ENCODE measurements at regions of chr22 and their contacts with region 1.

Region 1: DNA sequence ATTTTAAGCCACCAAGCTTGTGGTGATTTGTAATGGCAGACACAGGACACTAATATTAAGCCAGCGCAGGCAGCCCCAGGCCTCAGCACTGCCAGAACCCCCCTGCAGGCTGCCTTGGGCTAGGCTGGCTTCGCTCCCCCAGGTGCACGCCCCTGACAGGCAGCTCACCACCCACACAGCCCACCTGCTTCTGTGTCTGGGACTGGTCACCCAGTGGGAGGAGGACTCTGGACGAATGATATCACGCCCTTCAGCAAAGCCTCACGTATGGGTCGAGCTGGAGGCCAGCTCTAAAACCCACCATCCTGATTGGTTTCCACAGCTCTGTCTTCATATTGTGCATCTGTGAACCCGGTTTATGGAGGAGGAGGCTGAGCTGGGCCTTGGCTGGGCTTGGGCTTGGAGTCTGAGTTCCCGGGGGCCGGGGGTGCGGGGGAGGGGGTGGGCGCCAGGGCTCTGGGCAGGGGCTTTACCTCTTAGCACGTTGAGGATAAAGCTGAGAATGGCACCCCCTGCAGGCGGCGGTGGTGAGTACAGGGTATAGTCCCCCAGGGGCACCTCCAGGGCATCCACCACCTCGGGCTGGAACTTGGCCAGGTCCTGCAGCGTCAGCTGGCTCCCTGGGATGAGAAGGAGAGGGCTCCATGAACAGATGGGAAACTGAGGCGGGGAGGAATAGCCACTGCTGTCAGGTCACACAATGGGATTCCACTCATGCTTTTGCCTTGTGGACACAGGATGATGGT is 13.8 kb downstream of the GGT5 start:
- DNase-seq: peak; percentile 65
- ATAC-seq: peak; percentile 74
- H3K4me3 ChIP-seq: no peak overlapping the region
- H3K4me3 Mint-ChIP-seq: no peak overlapping the region
- H3K27ac ChIP-seq: no peak overlapping the region
- H3K27ac Mint-ChIP-seq: no peak overlapping the region
- H3K4me1 ChIP-seq: no peaks in the 10 kb centered on the region
- H3K4me1 Mint-ChIP-seq: peaks cover 1% of the 10 kb centered on the region
- H3K27me3 ChIP-seq: no peaks in the 10 kb centered on the region
- H3K27me3 Mint-ChIP-seq: no peaks in the 10 kb centered on the region
- CTCF ChIP-seq: peak; percentile 63

Region 2: DNA sequence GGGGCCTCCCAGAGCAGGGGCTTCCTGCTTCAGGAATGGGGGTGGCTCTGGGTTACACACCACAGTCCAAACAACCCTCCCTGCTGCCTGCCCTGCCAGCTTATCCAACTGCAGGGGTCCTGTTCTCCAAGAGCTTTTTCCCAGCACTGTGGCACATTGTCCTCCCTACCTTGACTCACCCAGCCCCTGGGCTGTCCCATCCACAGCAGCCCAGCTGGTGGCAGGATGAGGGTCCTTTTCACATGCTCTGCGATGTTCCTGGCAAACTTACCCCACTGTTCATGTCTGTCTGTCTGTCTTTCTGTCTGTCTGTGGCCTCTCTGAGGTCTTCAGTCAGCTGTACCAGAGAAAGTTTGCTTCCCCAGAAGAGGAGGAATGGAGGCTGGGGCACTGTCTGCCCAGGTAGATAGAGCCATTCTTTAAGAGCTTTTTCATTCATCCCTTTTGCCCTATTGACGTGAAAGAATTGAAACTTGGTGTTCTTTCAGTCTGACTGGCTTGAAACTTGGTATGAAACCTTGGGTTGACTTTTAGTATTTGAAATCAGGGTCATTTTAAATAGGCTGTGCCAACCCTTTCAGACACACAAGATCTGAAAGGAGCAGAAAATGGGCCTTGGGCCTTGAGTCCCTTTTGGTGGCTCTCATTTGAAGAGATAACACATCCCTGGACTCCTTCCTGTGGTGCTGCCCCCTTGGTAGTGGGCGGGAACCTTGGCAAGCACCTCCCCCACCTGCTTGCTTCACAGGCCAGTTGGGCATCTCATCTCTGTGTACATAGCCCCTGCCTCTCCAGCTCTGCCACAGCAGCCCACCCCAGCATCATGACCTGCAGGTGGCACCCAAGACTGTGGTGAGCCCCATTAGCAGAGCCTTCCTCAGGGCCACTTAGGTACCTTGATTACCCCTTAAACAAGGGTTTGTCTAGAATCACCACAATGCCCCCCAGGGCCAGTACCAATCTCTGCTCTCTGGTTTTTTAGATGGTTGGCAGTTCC is 124.4 kb before region 1 on chr22:
- CTCF ChIA-PET with region 1: interaction called, 15 read pairs
- POLR2A ChIA-PET with region 1: no interaction called
- intact Hi-C with region 1: no loop called
- DNase-seq: peak; percentile 66
- ATAC-seq: peak; percentile 69
- H3K4me3 ChIP-seq: no peak overlapping the region
- H3K4me3 Mint-ChIP-seq: no peak overlapping the region
- H3K27ac ChIP-seq: no peak overlapping the region
- H3K27ac Mint-ChIP-seq: peak overlapping the region; percentile 37
- H3K4me1 ChIP-seq: no peaks in the 10 kb centered on the region
- H3K4me1 Mint-ChIP-seq: no peaks in the 10 kb centered on the region
- H3K27me3 ChIP-seq: no peaks in the 10 kb centered on the region
- H3K27me3 Mint-ChIP-seq: no peaks in the 10 kb centered on the region
- CTCF ChIP-seq: peak; percentile 63

Region 3: DNA sequence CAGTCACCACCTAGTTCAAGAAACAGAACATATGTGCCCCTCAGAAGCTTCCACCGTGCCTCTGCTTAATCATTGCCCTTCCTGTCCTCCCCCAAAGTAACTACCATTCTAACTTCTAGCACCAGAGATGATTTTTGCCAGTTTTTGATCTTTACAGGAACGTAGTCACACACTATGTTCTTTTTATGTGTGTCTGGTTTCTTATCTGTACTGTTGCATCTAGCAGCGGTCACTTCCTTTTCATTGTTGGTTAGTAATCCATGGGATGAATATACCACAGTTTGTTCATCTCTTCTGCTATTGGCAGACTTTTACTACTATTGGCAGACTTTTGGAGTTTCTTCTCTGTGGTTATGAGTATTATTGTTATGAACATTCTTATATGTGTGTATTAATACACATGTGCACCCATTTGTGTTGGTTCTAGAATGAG is 74.2 kb after region 1 on chr22:
- CTCF ChIA-PET with region 1: no interaction called
- POLR2A ChIA-PET with region 1: no interaction called
- intact Hi-C with region 1: no loop called
- DNase-seq: no peak
- ATAC-seq: no peak
- H3K4me3 ChIP-seq: no peak overlapping the region
- H3K4me3 Mint-ChIP-seq: no peak overlapping the region
- H3K27ac ChIP-seq: peak overlapping the region in 1 of 2 donors; percentile 17
- H3K27ac Mint-ChIP-seq: no peak overlapping the region
- H3K4me1 ChIP-seq: peaks cover 19 to 20% of the 10 kb centered on the region in 2 donors
- H3K4me1 Mint-ChIP-seq: peaks cover 46% of the 10 kb centered on the region
- H3K27me3 ChIP-seq: no peaks in the 10 kb centered on the region
- H3K27me3 Mint-ChIP-seq: no peaks in the 10 kb centered on the region
- CTCF ChIP-seq: no peak

Region 4: DNA sequence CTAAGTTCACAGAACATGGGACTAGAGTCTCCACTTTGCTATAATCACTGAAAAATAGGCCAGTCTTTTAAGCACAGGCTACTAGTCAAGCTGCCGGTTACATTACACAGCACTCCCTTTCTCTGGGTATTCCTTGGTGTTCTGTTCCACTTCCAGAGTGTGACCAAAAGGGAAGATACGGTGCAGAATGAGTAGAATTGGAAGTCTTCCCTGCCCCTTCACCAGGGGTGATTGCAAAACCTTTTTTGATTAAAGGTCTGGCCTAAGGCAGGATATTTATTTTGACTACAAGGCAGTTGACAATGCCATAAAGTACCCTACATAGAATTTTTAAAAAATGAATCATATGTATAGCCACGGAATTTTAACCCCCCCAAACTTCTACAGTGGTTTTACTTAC is 136.8 kb after region 1 on chr22:
- CTCF ChIA-PET with region 1: no interaction called
- POLR2A ChIA-PET with region 1: no interaction called
- intact Hi-C with region 1: no loop called
- DNase-seq: no peak
- ATAC-seq: no peak
- H3K4me3 ChIP-seq: no peak overlapping the region
- H3K4me3 Mint-ChIP-seq: no peak overlapping the region
- H3K27ac ChIP-seq: no peak overlapping the region
- H3K27ac Mint-ChIP-seq: no peak overlapping the region
- H3K4me1 ChIP-seq: no peaks in the 10 kb centered on the region
- H3K4me1 Mint-ChIP-seq: no peaks in the 10 kb centered on the region
- H3K27me3 ChIP-seq: no peaks in the 10 kb centered on the region
- H3K27me3 Mint-ChIP-seq: no peaks in the 10 kb centered on the region
- CTCF ChIP-seq: no peak

Measured in B cell (primary cell).